PC-3 (cell line): ENCODE measurements at regions of chr2 and their contacts with region 1.

Region 1: GRCh38 chr2:157055660-157056199 is 201.8 kb upstream of the GALNT5 start:
- DNase-seq: peak; percentile 58
- ATAC-seq: no peak
- H3K4me3 ChIP-seq: no peak overlapping the region
- H3K27ac ChIP-seq: peak overlapping the region; percentile 38
- H3K4me1 ChIP-seq: peaks cover 20% of the 10 kb centered on the region
- H3K27me3 ChIP-seq: no peaks in the 10 kb centered on the region
- CTCF ChIP-seq: peak; percentile 80

Region 2: DNA sequence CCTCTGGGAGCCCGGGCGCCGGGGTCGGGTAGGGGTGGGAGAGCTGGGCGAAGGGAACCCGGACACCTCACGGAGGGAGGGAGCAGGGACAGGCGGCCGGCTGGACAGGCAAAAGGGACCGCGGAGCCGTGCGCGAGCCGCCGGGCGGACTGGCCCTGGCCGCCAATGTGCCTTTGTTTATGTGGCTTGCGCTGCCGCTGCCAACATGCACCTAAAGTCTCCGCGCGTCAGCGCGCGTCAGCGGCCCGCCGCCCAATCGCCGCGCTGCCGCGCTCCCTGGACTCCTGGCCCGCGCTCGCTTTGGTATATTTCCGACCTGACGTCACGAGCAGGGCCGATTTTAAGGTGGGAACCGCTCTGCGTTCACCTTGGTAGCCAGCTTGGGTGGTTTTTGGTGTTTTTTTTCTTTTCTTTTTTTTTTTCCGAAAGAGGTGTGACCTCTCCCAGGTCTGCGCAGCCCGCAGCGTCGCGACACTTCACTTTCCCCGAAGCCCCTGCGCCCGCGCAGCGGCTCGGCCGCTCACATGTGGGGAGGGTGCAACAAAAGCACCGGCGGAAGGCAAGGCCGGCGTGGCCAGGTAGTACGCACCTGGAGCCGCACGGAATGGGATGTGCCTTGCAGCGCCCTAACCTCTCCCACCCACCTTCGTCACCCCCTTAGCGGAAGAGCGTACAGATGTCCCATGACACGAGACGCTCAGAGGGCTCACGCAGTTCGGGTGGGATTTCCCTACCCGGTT is 723.0 kb before region 1 on chr2 and contains the start of gene NR4A2:
- CTCF ChIA-PET with region 1: interaction called, 3 read pairs
- POLR2A ChIA-PET with region 1: no interaction called
- intact Hi-C with region 1: loop called (anchors 5 kb)
- DNase-seq: peak; percentile 90
- ATAC-seq: peak; percentile 62
- H3K4me3 ChIP-seq: peak within 1 kb of the TSS; percentile 95
- H3K27ac ChIP-seq: peak within 1 kb of the TSS; percentile 97
- H3K4me1 ChIP-seq: peaks cover 14% of the 10 kb centered on the region; the same call in 1 of the 2 replicates
- H3K27me3 ChIP-seq: no peaks in the 10 kb centered on the region
- CTCF ChIP-seq: no peak
- total RNA-seq, gene NR4A2: 12.0 and 13.8 TPM in 2 replicates

Region 3: GRCh38 chr2:156784020-156784701 is 271.6 kb before region 1 on chr2:
- CTCF ChIA-PET with region 1: interaction called, 3 read pairs
- POLR2A ChIA-PET with region 1: no interaction called
- intact Hi-C with region 1: loop called (anchors 5 kb)
- DNase-seq: no peak
- ATAC-seq: peak; percentile 49
- H3K4me3 ChIP-seq: no peak overlapping the region
- H3K27ac ChIP-seq: no peak overlapping the region
- H3K4me1 ChIP-seq: peaks cover 38% of the 10 kb centered on the region
- H3K27me3 ChIP-seq: no peaks in the 10 kb centered on the region
- CTCF ChIP-seq: no peak

Region 4: GRCh38 chr2:156935632-156936031 is 120.1 kb before region 1 on chr2:
- CTCF ChIA-PET with region 1: no interaction called
- POLR2A ChIA-PET with region 1: interaction called, 3 read pairs
- intact Hi-C with region 1: loop called (anchors 1 kb)
- DNase-seq: peak; percentile 98
- ATAC-seq: peak; percentile 95
- H3K4me3 ChIP-seq: no peak overlapping the region; the same call in 1 of the 2 replicates
- H3K27ac ChIP-seq: peak overlapping the region; percentile 60
- H3K4me1 ChIP-seq: peaks cover 37% of the 10 kb centered on the region
- H3K27me3 ChIP-seq: no peaks in the 10 kb centered on the region
- CTCF ChIP-seq: no peak

Region 5: DNA sequence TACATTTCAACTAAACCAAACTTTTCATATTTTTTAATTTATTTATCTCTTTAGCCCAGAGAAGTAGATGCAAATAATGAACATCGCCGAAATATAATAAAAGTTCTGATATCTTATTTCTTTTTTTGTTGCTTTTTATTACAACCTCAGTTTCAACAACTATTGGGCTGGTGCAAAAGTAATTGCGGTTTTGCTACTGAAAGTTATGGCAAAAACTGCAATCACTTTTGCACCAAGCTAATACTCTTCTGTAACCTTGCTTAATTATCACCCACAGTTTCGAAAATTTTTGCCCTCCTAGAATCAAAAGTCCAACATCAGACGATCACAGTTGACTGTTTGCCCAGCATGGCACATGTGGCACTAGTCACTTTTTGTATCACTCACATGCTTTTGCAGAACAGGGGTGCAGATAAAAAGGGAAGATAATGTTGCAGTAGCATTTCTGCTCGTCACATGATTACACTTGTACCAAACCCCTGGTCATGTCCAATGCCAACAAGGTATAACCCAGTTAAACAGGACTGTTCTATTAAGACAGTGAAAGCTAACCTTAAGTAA is 40.6 kb before region 1 on chr2:
- CTCF ChIA-PET with region 1: no interaction called
- POLR2A ChIA-PET with region 1: no interaction called
- intact Hi-C with region 1: no loop called
- DNase-seq: no peak
- ATAC-seq: no peak
- H3K4me3 ChIP-seq: no peak overlapping the region
- H3K27ac ChIP-seq: no peak overlapping the region
- H3K4me1 ChIP-seq: no peaks in the 10 kb centered on the region
- H3K27me3 ChIP-seq: no peaks in the 10 kb centered on the region
- CTCF ChIP-seq: no peak

Region 6: DNA sequence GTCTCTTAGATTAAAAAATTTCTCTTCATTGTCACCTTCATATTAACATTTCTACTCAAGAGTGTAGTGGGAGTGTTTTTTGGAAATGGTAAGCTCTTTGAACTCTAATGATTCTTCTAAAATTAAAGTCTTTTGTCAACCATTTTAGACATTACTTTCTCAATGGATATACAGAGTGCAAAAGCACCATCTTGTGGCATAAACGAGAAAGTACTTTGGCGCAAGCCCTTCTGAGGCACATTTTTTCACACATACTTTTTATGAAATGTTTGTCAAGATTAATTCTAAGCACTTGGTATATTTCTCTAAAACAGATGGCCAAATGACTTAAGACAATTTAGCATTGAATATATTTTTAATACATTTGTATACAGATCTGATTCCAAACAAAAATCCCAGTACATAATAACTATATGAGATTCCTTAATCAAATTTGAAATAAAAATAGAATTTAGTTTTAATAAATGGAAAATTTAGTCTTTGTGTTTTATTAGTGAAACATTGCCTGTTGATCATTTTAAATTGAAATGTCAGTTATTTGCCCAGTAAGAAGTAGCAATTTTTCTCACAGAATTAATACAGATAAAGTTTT is 138.5 kb after region 1 on chr2:
- CTCF ChIA-PET with region 1: interaction called, 10 read pairs
- POLR2A ChIA-PET with region 1: no interaction called
- intact Hi-C with region 1: loop called (anchors 2 kb)
- DNase-seq: peak; percentile 79
- ATAC-seq: peak; percentile 45
- H3K4me3 ChIP-seq: no peak overlapping the region
- H3K27ac ChIP-seq: no peak overlapping the region
- H3K4me1 ChIP-seq: no peaks in the 10 kb centered on the region
- H3K27me3 ChIP-seq: no peaks in the 10 kb centered on the region
- CTCF ChIP-seq: peak; percentile 89